Heart left ventricle (tissue), 16 donors: ENCODE measurements at regions of chr14 and their contacts with region 1.

Region 1: DNA sequence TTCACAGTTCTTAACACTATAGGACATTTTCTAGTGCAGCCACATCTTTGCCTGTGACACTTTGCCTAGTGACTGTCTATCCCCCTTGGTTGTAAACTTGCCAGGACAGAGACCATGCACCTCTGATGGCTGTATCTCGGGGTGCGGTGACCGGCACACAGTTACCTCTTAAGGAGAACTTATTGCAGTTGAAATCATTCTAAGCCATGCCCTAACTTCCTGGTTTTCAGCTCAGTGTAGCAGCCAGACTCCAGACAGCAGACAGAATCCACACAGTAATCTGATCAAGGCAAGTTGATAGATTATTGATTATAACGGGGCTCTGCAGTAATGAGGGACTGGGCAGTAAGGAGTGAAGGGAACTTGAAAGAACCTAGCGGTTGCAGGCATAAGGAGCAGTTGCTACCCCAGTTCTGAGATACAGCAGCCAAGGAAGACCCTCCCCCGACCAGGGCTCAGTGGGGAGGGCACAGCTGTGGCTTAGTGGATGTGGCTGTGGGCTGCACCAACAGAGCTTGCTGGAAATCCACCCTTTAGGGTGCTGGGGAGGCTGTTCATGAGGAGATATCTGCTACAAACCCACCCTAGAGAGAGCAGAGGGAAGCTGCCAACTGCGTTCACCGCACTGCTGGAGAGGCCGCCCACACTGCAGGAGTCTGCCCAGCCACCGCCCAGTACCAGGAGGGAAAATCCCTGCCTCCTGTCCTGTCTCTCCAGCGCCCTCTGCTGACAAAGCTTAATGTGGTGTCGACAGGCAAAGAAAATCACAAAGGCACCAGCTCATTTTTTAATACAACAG is 58.2 kb upstream of the BEGAIN start:
- DNase-seq: peak; percentile 73 to 88 (median 83)
- ATAC-seq: peak; percentile 55 to 90 (median 87)
- H3K4me3 ChIP-seq: no peak overlapping the region
- H3K27ac ChIP-seq: no peak overlapping the region
- H3K4me1 ChIP-seq: peaks cover 0 to 13% (median 0%) of the 10 kb centered on the region in 12 donors
- H3K27me3 ChIP-seq: peaks cover 0 to 9% (median 0%) of the 10 kb centered on the region in 9 donors
- CTCF ChIP-seq: peak; percentile 49 to 85 (median 70)
- POLR2A ChIP-seq: no peak

Region 2: GRCh38 chr14:100383727-100384158 is 261.6 kb before region 1 on chr14:
- intact Hi-C with region 1: loop called (anchors 2 to 5 kb)
- DNase-seq: peak; percentile 34 to 77 (median 56)
- ATAC-seq: peak; percentile 64 to 78 (median 74)
- H3K4me3 ChIP-seq: no peak overlapping the region
- H3K27ac ChIP-seq: no peak overlapping the region
- H3K4me1 ChIP-seq: peaks cover 0 to 9% (median 1%) of the 10 kb centered on the region in 12 donors
- H3K27me3 ChIP-seq: no peaks in the 10 kb centered on the region
- CTCF ChIP-seq: peak; percentile 66 to 85 (median 77)
- POLR2A ChIP-seq: no peak

Region 3: DNA sequence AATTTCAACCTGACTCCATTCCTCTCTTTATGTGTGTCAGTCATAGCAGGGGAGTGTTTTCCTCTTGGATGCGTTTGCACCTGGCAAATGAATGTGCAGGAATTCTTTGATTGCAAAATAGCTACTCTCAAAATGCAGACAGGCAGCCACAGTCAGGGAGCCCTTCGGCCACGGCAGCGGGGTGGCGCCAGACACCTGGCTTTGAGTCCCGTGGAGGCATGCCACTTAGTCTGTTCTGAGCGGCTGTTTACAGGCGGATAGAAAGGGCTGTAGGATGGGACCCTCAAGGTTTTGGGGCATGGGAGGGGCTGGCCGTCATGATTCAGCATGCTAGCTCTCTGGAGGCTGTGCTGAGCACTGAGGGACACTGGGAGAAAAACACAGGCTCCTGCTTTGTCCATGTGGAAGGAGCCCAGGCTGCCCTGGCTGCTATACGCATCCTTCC is 205.2 kb before region 1 on chr14:
- intact Hi-C with region 1: loop called (anchors 1 to 10 kb)
- DNase-seq: peak; percentile 26 to 73 (median 67)
- ATAC-seq: peak; percentile 83 to 92 (median 88)
- H3K4me3 ChIP-seq: peak overlapping the region in 2 of 12 donors; percentile 4 to 28
- H3K27ac ChIP-seq: peak overlapping the region in 11 of 12 donors; percentile 8 to 72 (median 40)
- H3K4me1 ChIP-seq: peaks cover 0 to 23% (median 19%) of the 10 kb centered on the region in 12 donors
- H3K27me3 ChIP-seq: no peaks in the 10 kb centered on the region
- CTCF ChIP-seq: peak; percentile 23 to 78 (median 62)
- POLR2A ChIP-seq: no peak

Region 4: DNA sequence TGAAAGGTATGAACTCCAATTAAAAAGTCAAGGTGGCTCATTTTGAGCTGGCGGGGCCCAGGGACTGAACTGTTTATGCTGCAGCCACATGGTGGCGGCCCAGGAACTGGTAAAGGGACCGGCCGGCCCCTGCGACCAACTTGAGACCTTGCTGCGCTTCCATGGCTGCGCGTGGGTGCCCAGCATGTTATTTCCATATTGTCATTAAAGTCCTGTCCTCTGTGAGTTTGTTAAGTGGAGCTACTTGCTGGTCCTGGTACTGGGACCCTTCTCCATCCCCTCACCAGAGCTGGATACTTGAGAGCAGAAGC is 120.5 kb before region 1 on chr14:
- intact Hi-C with region 1: loop called in 2 of 10 experiments (anchors 10 kb)
- DNase-seq: peak in 1 of 5 donors; percentile 15
- ATAC-seq: no peak
- H3K4me3 ChIP-seq: no peak overlapping the region
- H3K27ac ChIP-seq: no peak overlapping the region
- H3K4me1 ChIP-seq: no peaks in the 10 kb centered on the region
- H3K27me3 ChIP-seq: no peaks in the 10 kb centered on the region
- CTCF ChIP-seq: peak in 8 of 12 donors; percentile 13 to 56 (median 24)
- POLR2A ChIP-seq: no peak

Region 5: DNA sequence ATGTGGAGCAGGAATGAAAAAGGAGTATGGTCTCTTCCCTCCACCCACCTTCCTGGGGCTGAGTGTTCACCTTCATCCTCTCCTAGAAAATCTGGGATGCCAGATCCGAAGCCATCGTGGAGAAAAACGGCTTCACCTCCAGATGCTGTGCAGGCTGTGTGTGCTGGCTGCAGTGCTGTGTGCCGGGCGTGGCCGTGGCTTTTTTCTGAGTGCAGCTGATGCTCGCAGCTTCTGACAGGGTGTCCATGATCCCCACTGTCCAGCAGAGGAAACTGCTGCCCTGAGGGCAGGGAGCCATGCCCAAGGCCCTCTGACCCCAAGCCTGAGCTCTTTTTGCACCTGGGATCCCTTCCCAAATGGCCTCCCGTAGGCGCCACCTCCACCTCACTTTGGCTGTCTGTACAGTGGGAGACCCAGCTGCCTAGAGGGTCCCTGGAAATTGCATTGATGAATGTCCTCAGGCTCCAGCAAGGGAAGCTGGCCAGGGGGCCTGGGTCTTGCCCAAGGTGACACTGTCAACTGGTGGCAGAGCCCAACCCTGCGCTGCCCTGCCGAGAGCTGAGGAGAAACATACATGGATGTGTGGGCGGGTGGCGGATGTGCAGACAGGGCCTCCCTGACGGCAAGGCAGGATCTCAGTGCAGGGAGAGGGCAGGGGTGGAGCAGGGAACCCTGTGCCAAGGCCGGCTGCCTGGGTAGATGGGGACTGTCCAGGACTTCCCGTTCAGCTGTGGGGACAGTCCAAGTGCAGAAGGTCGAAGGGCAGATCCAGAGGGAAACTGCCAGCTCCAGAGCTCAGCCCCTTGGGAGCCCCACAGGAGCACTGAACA is 111.5 kb before region 1 on chr14:
- intact Hi-C with region 1: loop called in 2 of 10 experiments (anchors 10 kb)
- DNase-seq: peak in 4 of 5 donors; percentile 9 to 51 (median 22)
- ATAC-seq: peak in 1 of 4 donors; percentile 21
- H3K4me3 ChIP-seq: no peak overlapping the region
- H3K27ac ChIP-seq: no peak overlapping the region
- H3K4me1 ChIP-seq: peaks cover 0 to 18% (median 0%) of the 10 kb centered on the region in 12 donors
- H3K27me3 ChIP-seq: no peaks in the 10 kb centered on the region
- CTCF ChIP-seq: no peak
- POLR2A ChIP-seq: no peak

Region 6: DNA sequence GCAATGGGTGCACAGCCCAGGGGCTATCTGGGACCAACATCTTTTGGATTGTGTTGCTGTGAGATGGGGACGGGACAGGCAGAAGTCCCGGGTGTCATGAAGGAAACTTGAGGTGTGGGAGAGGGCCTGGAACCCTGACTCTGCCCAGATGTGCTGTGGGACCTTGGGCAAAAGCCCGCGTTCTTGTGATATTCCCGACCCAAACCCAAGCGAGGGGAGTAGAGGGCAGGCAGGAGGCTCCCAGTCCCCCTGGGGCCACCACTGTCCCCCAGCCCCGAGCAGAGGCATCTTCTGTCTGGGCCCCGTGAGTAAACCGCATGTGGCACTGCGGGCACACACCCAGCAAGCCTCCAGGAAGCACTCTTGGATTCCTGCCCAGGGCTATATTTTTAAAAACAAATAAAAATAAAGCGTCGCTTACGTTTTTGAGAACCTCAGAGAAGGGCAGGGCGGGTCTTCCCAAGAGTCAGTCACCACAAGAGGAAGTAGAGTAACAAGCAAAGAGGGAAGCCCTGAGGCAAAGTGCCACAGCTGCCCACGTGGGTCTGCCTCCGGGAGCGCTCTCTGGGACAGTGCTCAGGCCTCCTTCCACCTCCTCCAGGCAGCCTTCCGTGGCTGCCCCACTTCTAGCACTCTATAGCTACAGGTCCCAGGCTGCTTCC is 97.6 kb before region 1 on chr14:
- intact Hi-C with region 1: loop called in 1 of 10 experiments (anchors 2 kb)
- DNase-seq: peak; percentile 30 to 84 (median 68)
- ATAC-seq: peak; percentile 50 to 80 (median 61)
- H3K4me3 ChIP-seq: peak overlapping the region in 1 of 12 donors; percentile 1
- H3K27ac ChIP-seq: peak overlapping the region in 2 of 12 donors; percentile 17 to 71
- H3K4me1 ChIP-seq: peaks cover 0 to 26% (median 8%) of the 10 kb centered on the region in 12 donors
- H3K27me3 ChIP-seq: peaks cover 0 to 8% (median 0%) of the 10 kb centered on the region in 9 donors
- CTCF ChIP-seq: no peak
- POLR2A ChIP-seq: no peak

Region 7: DNA sequence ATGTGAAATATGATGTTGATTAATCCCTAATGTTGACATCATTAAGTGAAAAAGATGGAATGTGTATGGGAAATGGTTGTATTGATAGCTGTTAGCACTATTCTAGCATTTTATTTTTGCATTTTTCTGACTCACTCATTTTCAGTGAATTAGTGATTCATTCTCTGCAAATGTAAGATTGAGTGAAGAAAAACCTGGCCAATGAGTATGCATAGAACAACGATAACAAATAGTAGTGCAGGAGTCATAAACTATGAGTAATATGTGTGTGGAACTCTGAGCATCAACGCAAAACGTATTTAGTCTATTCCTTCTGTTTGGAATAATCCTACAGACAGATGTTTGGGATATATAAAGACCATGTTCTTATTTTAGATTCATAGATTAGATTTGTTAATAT is 334.4 kb after region 1 on chr14:
- intact Hi-C with region 1: no loop called
- DNase-seq: no peak
- ATAC-seq: no peak
- H3K4me3 ChIP-seq: no peak overlapping the region
- H3K27ac ChIP-seq: no peak overlapping the region
- H3K4me1 ChIP-seq: no peaks in the 10 kb centered on the region
- H3K27me3 ChIP-seq: peaks cover 0 to 8% (median 0%) of the 10 kb centered on the region in 9 donors
- CTCF ChIP-seq: no peak
- POLR2A ChIP-seq: no peak